Dorsolateral prefrontal cortex (tissue), 120 donors: ENCODE measurements at regions of chr20 and their contacts with region 1.

Region 1: DNA sequence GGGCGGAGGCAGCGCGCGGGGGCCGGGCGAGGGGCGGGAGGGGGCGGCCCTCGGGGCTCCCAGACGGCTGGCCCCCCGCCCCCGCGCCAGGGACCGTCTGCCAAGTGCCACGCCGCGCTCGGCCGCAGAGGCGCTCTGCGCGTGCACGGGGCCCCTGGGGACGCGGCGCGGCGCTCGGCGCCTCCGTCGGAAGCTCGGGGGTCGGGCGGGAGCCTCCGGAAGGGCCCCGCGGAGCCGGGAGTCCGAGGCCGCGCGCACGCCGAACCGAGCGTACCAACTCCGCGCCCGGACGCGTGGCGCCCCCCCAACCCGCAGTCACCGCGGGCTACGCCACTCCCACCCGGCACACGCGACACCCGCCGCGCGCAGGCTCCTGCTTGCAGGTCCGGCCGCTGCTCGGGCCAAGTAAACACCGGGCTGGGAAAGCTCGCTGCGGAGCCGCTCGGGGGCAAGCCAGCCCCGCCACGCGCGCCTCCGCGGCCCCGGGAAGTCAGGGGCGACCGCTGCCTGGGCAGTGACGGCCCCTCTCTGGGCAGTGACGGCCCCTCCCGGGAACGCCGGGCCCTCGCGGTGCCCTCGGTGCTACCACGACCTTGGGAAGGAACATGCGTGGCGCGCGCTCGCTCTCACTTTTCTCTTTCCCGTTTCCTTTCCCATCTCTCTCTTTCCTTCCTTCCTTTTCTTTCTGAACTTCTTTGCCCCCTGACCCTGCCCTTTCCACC is 384 bp upstream of the PREX1 start:
- DNase-seq: peak; percentile 26 to 88 (median 72)
- H3K4me3 ChIP-seq: peak overlapping the region; percentile 48 to 94 (median 69)
- H3K27ac ChIP-seq: peak overlapping the region; percentile 9 to 98 (median 92)
- H3K27me3 ChIP-seq: no peaks in the 10 kb centered on the region
- CTCF ChIP-seq: peak in 42 of 56 donors; percentile 8 to 65 (median 32)

Region 2: GRCh38 chr20:48722737-48723191 is 105.4 kb before region 1 on chr20:
- intact Hi-C with region 1: loop called in 1 of 2 experiments (anchors 5 kb)
- DNase-seq: no peak
- H3K4me3 ChIP-seq: peak overlapping the region in 2 of 59 donors; percentile 2 to 5
- H3K27ac ChIP-seq: peak overlapping the region; percentile 80 to 100 (median 98)
- H3K27me3 ChIP-seq: no peaks in the 10 kb centered on the region
- CTCF ChIP-seq: no peak

Region 3: GRCh38 chr20:48745326-48745725 is 82.9 kb before region 1 on chr20:
- intact Hi-C with region 1: loop called (anchors 5 kb)
- DNase-seq: no peak
- H3K4me3 ChIP-seq: no peak overlapping the region
- H3K27ac ChIP-seq: peak overlapping the region in 55 of 59 donors; percentile 12 to 100 (median 82)
- H3K27me3 ChIP-seq: no peaks in the 10 kb centered on the region
- CTCF ChIP-seq: peak in 10 of 56 donors; percentile 16 to 42 (median 23)

Region 4: DNA sequence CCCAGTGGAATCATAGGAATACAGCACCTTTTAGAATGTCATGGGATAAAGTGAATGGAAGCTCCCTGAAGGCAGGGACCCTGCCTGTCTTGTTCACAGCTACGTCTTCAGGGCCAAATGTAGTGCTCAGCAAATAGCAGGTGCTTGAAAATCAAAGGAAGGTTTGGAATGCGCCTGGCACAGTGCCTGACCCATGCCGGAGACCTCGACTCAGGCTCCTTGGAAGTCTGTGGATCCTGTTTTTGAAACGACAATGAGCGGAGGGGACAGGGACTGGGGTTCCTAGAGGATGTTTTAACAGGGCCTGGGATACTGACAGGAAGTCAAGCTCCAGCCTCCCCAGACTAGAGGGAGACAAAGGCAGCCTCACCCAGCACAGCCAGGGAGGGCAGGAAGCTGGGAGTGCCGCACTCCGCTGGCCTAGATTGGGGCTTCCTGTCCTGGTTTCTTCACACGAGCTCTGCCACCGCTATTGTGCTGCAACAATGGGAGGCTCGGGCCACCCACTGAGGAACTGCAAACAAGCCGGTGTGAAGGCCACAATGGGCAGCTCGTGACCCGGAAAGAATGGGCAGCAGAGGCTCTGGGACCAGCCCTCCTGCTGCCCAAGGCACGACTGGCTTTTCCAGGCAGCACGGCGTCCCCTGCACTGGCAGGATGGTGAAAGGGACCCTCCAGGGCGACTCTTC is 77.1 kb before region 1 on chr20:
- intact Hi-C with region 1: loop called (anchors 5 kb)
- DNase-seq: peak in 9 of 10 donors; percentile 61 to 80 (median 77)
- H3K4me3 ChIP-seq: peak overlapping the region in 7 of 59 donors; percentile 2 to 21 (median 12)
- H3K27ac ChIP-seq: peak overlapping the region; percentile 53 to 100 (median 94)
- H3K27me3 ChIP-seq: no peaks in the 10 kb centered on the region
- CTCF ChIP-seq: peak in 14 of 56 donors; percentile 5 to 37 (median 13)

Region 5: GRCh38 chr20:48889144-48890114 is 61.2 kb after region 1 on chr20:
- intact Hi-C with region 1: loop called in 1 of 2 experiments (anchors 5 kb)
- DNase-seq: no peak
- H3K4me3 ChIP-seq: no peak overlapping the region
- H3K27ac ChIP-seq: no peak overlapping the region
- H3K27me3 ChIP-seq: no peaks in the 10 kb centered on the region
- CTCF ChIP-seq: no peak

Region 6: DNA sequence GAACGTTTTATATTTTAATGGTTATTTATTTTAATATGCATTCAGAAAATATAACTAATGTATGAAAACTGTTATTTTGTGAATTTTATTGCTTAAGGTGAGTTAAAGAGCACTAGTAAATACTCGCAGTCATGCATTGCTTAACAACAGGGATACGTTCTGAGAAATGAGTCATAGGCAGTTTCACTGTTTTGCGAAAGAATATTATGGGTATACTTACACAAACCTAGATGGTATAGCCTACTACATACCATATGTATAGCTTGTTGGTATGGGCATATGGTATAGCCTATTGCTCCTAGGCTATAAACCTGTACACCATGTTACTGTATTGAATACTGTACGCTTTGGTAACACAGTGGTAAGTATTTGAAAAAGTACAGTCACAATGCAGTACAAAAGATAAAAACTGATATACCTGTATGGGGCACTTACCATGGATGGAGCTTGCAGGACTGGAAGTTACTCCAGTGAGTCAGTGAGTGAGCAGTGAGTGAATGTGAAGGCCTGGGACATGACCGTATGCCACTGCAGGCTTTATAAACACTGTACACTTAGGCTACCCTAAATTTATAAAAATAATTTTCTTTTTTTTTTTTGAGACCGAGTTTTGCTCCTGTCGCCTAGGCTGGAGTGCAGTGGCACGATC is 131.8 kb after region 1 on chr20:
- intact Hi-C with region 1: no loop called
- DNase-seq: no peak
- H3K4me3 ChIP-seq: no peak overlapping the region
- H3K27ac ChIP-seq: no peak overlapping the region
- H3K27me3 ChIP-seq: no peaks in the 10 kb centered on the region
- CTCF ChIP-seq: no peak